GM12878 (cell line): ENCODE measurements at regions of chr6 and their contacts with region 1.

Region 1: GRCh38 chr6:53484476-53485280 is 60.2 kb downstream of the GCLC start:
- DNase-seq: no peak
- ATAC-seq: peak; percentile 65
- H3K4me3 ChIP-seq: no peak overlapping the region
- H3K27ac ChIP-seq: no peak overlapping the region
- H3K4me1 ChIP-seq: no peaks in the 10 kb centered on the region
- H3K27me3 ChIP-seq: no peaks in the 10 kb centered on the region
- CTCF ChIP-seq: peak; percentile 88 to 98 (median 96); a peak in 5 of 6 replicates
- EP300 ChIP-seq: no peak
- POLR2A ChIP-seq: no peak
- RAD21 ChIP-seq: peak; percentile 99

Region 2: DNA sequence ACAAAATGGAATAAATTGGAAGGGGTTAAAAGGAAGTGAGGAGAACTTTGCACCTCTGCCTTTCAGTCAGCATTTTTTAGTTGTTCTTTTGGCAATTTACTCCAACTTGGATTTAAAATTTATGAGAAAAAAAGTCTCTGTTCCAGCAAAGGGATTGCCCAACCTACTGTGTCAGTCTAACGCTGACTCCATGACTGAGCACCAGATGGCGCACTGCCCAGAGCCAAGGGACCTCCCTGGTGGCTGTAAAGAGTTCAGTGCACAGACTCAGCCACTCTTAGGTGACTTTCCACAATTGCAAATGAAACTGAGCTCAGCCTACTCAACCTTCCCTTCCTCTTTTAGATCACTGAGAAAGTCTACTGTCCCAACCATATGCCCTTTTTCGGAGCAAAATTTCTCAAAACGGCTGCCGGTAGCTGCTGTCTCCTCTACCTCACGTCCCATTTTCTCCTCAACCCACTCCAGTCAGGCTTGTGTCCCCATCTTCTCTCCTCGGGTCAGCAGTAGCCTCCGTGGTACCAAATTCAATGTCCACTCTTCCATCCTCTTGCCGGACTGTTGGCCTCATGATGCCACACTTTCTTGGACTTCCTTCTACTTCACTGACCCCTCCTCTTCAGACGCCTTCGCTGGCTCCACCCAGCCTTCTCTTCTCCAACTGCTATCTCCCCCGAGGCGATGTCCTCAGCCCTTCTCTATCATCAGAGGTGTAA is 760.1 kb before region 1 on chr6:
- CTCF ChIA-PET with region 1: no interaction called
- POLR2A ChIA-PET with region 1: no interaction called
- RAD21 ChIA-PET with region 1: interaction called, 5 read pairs
- SMC1A ChIA-PET with region 1: no interaction called
- in situ Hi-C with region 1: no loop called
- intact Hi-C with region 1: loop called (anchors 5 kb)
- DNase-seq: peak; percentile 55
- ATAC-seq: peak; percentile 100
- H3K4me3 ChIP-seq: no peak overlapping the region
- H3K27ac ChIP-seq: no peak overlapping the region
- H3K4me1 ChIP-seq: peaks cover 5% of the 10 kb centered on the region
- H3K27me3 ChIP-seq: no peaks in the 10 kb centered on the region
- CTCF ChIP-seq: peak; percentile 82 to 95 (median 91)
- EP300 ChIP-seq: no peak
- POLR2A ChIP-seq: no peak
- RAD21 ChIP-seq: peak; percentile 53

Region 3: GRCh38 chr6:53107091-53107490 is 377.6 kb before region 1 on chr6:
- CTCF ChIA-PET with region 1: interaction called, 7 read pairs
- POLR2A ChIA-PET with region 1: no interaction called
- RAD21 ChIA-PET with region 1: no interaction called
- SMC1A ChIA-PET with region 1: no interaction called
- in situ Hi-C with region 1: no loop called
- intact Hi-C with region 1: loop called (anchors 5 kb)
- DNase-seq: no peak
- ATAC-seq: no peak
- H3K4me3 ChIP-seq: no peak overlapping the region
- H3K27ac ChIP-seq: no peak overlapping the region
- H3K4me1 ChIP-seq: peaks cover 7% of the 10 kb centered on the region; the same call in 1 of the 2 replicates
- H3K27me3 ChIP-seq: no peaks in the 10 kb centered on the region
- CTCF ChIP-seq: no peak
- EP300 ChIP-seq: no peak
- POLR2A ChIP-seq: no peak
- RAD21 ChIP-seq: no peak

Region 4: DNA sequence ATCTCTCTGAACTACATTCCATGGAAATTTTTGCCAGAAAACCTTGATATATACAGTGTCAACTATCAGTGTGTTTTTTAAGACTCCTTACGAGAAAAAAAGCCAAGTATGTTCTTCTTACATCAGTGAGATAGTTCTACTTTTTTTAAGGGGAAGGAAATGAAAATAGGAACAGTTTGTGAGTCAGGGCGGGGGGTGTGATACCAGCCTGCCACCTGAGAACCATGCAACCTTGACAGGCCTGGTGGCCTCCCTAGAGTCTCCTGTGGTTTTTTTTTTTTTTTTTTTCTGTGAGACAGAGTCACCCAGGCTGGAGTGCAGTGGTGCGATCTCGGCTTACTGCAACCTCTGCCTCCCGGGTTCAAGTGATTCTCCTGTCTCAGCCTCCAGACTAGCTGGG is 239.7 kb before region 1 on chr6:
- CTCF ChIA-PET with region 1: interaction called, 3 read pairs
- POLR2A ChIA-PET with region 1: no interaction called
- RAD21 ChIA-PET with region 1: no interaction called
- SMC1A ChIA-PET with region 1: interaction called, 3 read pairs
- in situ Hi-C with region 1: no loop called
- intact Hi-C with region 1: loop called (anchors 2 kb)
- DNase-seq: peak; percentile 72
- ATAC-seq: peak; percentile 87
- H3K4me3 ChIP-seq: no peak overlapping the region
- H3K27ac ChIP-seq: no peak overlapping the region
- H3K4me1 ChIP-seq: peaks cover 35% of the 10 kb centered on the region
- H3K27me3 ChIP-seq: no peaks in the 10 kb centered on the region
- CTCF ChIP-seq: no peak
- EP300 ChIP-seq: peak in 1 of 2 experiments; percentile 51; a peak in 1 of 4 replicates
- POLR2A ChIP-seq: no peak
- RAD21 ChIP-seq: no peak

Region 5: DNA sequence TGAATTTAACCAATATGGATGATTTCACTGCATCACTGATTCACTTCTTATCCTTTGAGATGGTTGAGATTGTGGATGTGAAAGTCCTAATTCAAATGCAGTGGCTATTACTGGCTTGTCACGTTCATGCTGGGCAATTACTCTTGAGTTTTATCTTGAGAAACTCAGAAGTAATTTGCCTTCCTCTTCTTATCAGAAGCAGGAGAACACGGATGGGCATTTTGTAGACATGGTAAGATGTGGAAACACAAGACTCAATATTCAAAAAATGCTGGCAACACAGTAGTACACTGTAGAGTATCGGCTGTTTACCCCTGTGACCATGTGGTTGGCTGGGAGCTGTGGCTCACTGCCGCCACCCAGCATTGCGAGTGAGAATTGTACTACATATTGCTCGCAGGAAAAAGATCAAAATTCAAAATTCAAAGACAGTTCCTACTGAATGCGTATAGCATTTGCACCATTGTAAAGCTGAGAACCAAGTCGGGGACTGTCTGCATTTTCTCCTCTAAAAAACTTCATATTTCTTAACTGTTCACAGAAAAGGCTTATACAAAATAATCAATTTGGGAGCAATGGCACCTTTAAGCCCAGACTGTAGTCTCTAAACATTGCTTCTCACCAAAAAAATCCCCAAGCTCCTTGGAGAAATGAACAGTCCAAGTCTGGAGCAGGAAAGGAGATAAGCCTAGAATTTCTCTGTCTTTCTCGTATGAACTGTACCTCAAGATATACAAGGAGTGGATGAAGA is 74.0 kb before region 1 on chr6:
- CTCF ChIA-PET with region 1: interaction called, 32 read pairs
- POLR2A ChIA-PET with region 1: no interaction called
- RAD21 ChIA-PET with region 1: interaction called, 5 read pairs
- SMC1A ChIA-PET with region 1: interaction called, 6 read pairs
- in situ Hi-C with region 1: no loop called
- intact Hi-C with region 1: loop called (anchors 1 kb)
- DNase-seq: peak; percentile 37
- ATAC-seq: peak; percentile 100
- H3K4me3 ChIP-seq: no peak overlapping the region
- H3K27ac ChIP-seq: no peak overlapping the region
- H3K4me1 ChIP-seq: peaks cover 4% of the 10 kb centered on the region; the same call in 1 of the 2 replicates
- H3K27me3 ChIP-seq: no peaks in the 10 kb centered on the region
- CTCF ChIP-seq: peak; percentile 85 to 92 (median 86)
- EP300 ChIP-seq: 0 out of 4 replicates have a peak, but pooled peaks of 1 of the 2 experiments have one; percentile 14
- POLR2A ChIP-seq: no peak
- RAD21 ChIP-seq: peak; percentile 86

Region 6: GRCh38 chr6:53446151-53446550 is 38.5 kb before region 1 on chr6:
- CTCF ChIA-PET with region 1: interaction called, 164 read pairs
- POLR2A ChIA-PET with region 1: no interaction called
- RAD21 ChIA-PET with region 1: interaction called, 51 read pairs
- SMC1A ChIA-PET with region 1: interaction called, 111 read pairs
- in situ Hi-C with region 1: no loop called
- intact Hi-C with region 1: loop called (anchors 1 kb)
- DNase-seq: no peak
- ATAC-seq: no peak
- H3K4me3 ChIP-seq: no peak overlapping the region
- H3K27ac ChIP-seq: no peak overlapping the region
- H3K4me1 ChIP-seq: no peaks in the 10 kb centered on the region
- H3K27me3 ChIP-seq: peaks cover 0 to 8% of the 10 kb centered on the region in 2 experiments; a peak in 1 of 4 replicates
- CTCF ChIP-seq: no peak
- EP300 ChIP-seq: no peak
- POLR2A ChIP-seq: no peak
- RAD21 ChIP-seq: no peak

Region 7: DNA sequence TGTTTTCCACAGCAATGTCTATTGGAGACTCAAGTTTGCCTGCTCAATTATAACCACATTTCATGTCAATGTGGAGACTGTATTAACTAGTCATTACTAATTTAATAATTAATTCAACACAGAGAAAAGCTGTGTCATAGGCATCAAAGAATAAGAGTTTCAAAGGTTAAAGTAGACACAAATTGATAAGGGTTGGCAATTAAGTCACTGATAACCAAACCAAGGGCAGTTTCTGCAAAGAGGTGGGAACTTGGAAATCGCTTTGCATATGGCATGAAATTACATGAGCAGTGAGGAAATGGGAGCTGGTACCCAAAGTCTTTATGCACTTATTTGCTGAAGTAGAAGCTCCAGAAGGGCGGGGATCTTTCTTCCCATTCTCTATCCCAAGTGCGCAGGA is 26.1 kb after region 1 on chr6:
- CTCF ChIA-PET with region 1: interaction called, 4 read pairs
- POLR2A ChIA-PET with region 1: interaction called, 12 read pairs
- RAD21 ChIA-PET with region 1: no interaction called
- SMC1A ChIA-PET with region 1: interaction called, 3 read pairs
- in situ Hi-C with region 1: no loop called
- intact Hi-C with region 1: no loop called
- DNase-seq: no peak
- ATAC-seq: no peak
- H3K4me3 ChIP-seq: no peak overlapping the region
- H3K27ac ChIP-seq: no peak overlapping the region
- H3K4me1 ChIP-seq: no peaks in the 10 kb centered on the region
- H3K27me3 ChIP-seq: no peaks in the 10 kb centered on the region
- CTCF ChIP-seq: no peak
- EP300 ChIP-seq: no peak
- POLR2A ChIP-seq: no peak
- RAD21 ChIP-seq: no peak

Region 8: DNA sequence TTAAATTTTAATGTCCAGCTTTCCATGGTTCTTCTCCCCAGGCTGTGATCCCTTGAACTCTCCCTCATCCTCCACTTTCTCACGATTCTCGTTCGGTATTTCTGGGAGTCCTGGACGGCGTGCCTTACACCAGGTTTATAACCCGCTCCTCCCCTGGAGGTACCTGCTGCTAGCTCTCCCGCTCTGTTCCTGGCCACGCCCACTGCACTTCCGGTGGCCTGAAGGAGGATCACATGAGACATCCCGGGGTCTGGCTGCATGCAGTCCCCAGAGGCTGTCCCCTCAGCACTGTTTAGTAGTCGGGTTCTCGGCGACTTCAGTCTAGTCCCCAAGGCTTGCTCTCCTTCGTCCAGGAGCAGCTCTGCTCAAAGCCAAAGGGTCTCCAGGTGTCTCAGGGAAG is 88.6 kb after region 1 on chr6:
- CTCF ChIA-PET with region 1: no interaction called
- POLR2A ChIA-PET with region 1: no interaction called
- RAD21 ChIA-PET with region 1: no interaction called
- SMC1A ChIA-PET with region 1: no interaction called
- in situ Hi-C with region 1: no loop called
- intact Hi-C with region 1: no loop called
- DNase-seq: no peak
- ATAC-seq: no peak
- H3K4me3 ChIP-seq: no peak overlapping the region
- H3K27ac ChIP-seq: no peak overlapping the region
- H3K4me1 ChIP-seq: no peaks in the 10 kb centered on the region
- H3K27me3 ChIP-seq: no peaks in the 10 kb centered on the region
- CTCF ChIP-seq: no peak
- EP300 ChIP-seq: no peak
- POLR2A ChIP-seq: no peak
- RAD21 ChIP-seq: no peak